PC-9 (cell line): ENCODE measurements at regions of chr2 and their contacts with region 1.

Region 1: DNA sequence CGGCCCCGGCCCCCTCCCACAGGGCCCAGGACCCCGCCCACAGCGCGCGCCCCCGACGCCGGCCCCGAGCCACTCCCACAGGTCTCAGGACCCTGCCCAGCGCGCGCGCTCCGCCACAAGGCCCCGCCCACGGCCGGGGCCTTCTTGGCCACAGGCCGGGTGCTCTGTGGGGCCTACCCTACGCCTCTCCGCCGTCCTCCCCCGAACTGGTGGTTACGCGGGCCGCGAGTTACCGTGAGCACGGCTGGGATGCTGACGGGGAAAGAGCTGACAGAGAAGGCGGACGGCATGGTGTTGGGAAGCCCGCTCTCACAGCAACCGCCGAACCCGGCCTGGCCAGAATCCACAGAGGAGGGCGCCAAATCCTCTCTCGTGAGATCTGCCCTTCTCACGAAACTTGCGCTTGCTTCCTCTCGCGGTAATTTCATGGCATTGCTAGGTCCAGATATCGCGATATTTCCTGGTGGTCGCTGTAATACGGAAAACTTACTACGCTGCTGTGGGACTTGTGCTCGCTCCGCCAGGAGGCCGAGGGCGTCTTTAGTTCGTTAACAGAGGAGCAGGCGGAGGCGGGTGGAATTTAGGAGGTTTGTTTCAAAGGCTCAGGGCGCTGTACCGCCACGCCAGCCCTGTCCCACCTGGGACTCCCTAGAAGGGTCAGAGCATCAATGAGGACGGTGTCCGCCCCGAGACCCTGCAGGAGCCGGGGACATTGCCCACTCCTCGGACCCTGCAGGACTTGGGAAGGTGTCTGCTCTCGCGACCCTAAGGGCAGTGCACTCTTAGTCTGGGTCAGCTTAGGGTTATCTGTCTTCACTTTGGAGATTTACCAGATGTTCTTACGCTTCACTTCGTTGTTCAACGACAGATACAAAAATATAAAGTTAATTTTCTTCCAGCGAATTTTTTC is at the start of gene TMEM18:
- DNase-seq: peak; percentile 90 to 98
- H3K4me3 ChIP-seq: peak within 1 kb of the TSS; percentile 77
- H3K27ac ChIP-seq: peak within 1 kb of the TSS; percentile 97
- H3K4me1 ChIP-seq: peaks cover 22% of the 10 kb centered on the region
- H3K27me3 ChIP-seq: peaks cover 13% of the 10 kb centered on the region; the same call in 1 of the 2 replicates
- CTCF ChIP-seq: no peak; the same call in 1 of the 2 replicates
- total RNA-seq, gene TMEM18: 30.5 and 32.4 TPM in 2 replicates

Region 2: GRCh38 chr2:264660-265468 is 412.4 kb before region 1 on chr2 and contains the start of gene ACP1:
- CTCF ChIA-PET with region 1: no interaction called
- POLR2A ChIA-PET with region 1: no interaction called
- intact Hi-C with region 1: loop called (anchors 1 kb)
- DNase-seq: peak; percentile 93 to 98
- H3K4me3 ChIP-seq: peak within 1 kb of the TSS; percentile 83
- H3K27ac ChIP-seq: peak within 1 kb of the TSS; percentile 93
- H3K4me1 ChIP-seq: peaks cover 33% of the 10 kb centered on the region
- H3K27me3 ChIP-seq: no peaks in the 10 kb centered on the region
- CTCF ChIP-seq: no peak
- total RNA-seq, gene ACP1: 115 and 116 TPM in 2 replicates

Region 3: GRCh38 chr2:741195-741496 is 63.8 kb after region 1 on chr2:
- CTCF ChIA-PET with region 1: no interaction called
- POLR2A ChIA-PET with region 1: no interaction called
- intact Hi-C with region 1: loop called (anchors 2 kb)
- DNase-seq: no peak
- H3K4me3 ChIP-seq: no peak overlapping the region
- H3K27ac ChIP-seq: no peak overlapping the region
- H3K4me1 ChIP-seq: no peaks in the 10 kb centered on the region
- H3K27me3 ChIP-seq: peaks cover 47% of the 10 kb centered on the region; the same call in 1 of the 2 replicates
- CTCF ChIP-seq: no peak